Activated CD4-positive, alpha-beta T cell treated with anti-CD3 and anti-CD28 coated beads, Interleukin-2, amount 10 ng/mL, durations not matched to agents 24 days and 14 days (primary cell): ENCODE measurements at regions of chr13 and their contacts with region 1.

Region 1: GRCh38 chr13:40388617-40389016 is 277.8 kb downstream of the FOXO1 start:
- DNase-seq: peak; percentile 95
- H3K4me3 Mint-ChIP-seq: peak overlapping the region; percentile 87
- H3K27ac Mint-ChIP-seq: peak overlapping the region; percentile 97
- H3K4me1 Mint-ChIP-seq: peaks cover 38% of the 10 kb centered on the region
- H3K27me3 Mint-ChIP-seq: no peaks in the 10 kb centered on the region

Region 2: DNA sequence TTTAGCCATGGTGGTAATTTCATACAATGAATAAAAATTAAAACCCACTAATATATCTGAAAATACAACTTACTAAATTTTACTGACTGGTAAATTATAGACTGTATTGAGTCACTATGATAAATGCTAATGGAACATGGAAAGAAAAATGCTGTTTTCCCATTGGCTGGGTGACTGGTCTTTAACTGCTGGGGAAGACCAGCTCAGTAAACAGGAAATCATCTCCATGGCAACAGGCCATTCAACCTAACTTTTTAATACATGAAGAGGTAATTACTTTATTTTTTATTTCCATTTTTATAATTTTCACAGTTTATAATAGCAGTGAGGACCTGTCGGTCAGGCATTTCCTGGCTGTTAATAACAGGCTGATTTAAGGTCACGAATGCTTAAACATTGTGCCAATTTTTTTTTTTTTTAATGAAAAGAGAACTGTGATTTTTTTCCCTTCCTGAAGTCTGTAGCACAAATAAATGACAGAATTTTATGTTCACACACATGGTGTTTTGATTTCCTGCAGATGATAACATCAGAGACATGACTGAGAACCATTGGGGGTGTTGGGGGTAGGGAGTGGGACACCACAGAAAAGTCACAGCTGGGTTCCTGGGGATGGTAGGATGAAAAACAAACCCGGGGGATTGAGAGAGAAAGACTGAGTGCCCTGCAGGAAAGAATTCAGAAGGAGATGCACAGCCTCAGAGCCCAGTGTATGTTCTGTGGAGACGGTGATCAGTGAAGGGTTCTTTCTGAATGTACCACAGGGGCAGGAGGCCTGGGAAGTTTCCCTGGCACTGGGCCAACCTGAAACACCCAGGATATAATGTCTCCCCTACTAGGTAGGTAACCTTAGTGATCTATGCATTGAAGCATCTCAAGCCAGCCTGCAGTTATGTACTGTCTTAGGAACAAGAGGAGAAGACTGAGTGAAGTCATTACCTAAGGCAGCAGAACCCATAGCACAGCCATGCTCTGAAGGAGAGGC is 436.1 kb before region 1 on chr13:
- intact Hi-C with region 1: loop called (anchors 10 kb)
- DNase-seq: no peak
- H3K4me3 Mint-ChIP-seq: no peak overlapping the region
- H3K27ac Mint-ChIP-seq: peak overlapping the region; percentile 54
- H3K4me1 Mint-ChIP-seq: peaks cover 30% of the 10 kb centered on the region
- H3K27me3 Mint-ChIP-seq: peaks cover 5% of the 10 kb centered on the region

Region 3: DNA sequence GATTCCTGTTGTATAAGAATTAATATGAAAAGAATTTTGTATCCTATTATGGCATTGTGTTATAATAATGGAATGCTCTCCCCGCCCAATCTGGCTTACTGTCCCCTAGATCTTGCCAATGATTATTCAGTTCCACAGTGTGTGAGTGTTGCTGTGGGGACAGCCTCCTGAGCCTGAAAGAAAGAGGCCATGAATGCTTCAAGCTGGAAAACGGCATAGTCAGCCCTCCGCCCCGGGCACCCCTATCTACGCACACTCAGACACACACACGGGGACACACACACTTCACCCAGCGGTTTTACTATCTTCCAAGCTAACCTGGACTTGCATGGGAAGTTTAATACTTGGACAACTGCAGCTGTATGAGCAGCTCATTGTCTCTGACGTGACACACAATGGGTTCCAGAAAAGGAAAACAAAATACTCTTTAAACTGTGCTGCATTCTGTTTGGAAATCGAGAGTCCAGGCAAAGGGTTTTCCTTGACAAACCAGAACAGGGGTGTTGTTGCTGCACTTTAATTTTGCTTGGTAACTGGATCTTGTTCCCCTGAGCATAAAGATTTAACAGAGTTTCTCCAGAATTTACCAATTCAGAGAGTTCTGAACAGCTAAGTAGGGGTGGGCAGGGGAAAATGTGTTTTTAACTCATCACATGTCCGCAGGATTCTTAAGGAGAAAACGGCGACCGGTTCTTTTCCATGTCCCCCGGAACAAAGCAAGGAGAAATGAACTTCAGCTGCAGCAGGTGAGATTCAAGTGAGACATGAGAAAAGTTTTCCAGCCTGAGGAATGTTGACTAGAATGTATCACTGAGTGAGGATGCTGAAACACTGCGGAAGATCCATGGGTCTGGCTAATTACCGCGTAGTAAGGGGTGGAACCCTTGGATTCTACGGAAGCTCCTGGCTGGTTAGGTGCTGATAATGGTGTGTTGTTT is 195.1 kb before region 1 on chr13:
- intact Hi-C with region 1: no loop called
- DNase-seq: no peak
- H3K4me3 Mint-ChIP-seq: no peak overlapping the region
- H3K27ac Mint-ChIP-seq: no peak overlapping the region
- H3K4me1 Mint-ChIP-seq: peaks cover 39% of the 10 kb centered on the region
- H3K27me3 Mint-ChIP-seq: no peaks in the 10 kb centered on the region

Region 4: DNA sequence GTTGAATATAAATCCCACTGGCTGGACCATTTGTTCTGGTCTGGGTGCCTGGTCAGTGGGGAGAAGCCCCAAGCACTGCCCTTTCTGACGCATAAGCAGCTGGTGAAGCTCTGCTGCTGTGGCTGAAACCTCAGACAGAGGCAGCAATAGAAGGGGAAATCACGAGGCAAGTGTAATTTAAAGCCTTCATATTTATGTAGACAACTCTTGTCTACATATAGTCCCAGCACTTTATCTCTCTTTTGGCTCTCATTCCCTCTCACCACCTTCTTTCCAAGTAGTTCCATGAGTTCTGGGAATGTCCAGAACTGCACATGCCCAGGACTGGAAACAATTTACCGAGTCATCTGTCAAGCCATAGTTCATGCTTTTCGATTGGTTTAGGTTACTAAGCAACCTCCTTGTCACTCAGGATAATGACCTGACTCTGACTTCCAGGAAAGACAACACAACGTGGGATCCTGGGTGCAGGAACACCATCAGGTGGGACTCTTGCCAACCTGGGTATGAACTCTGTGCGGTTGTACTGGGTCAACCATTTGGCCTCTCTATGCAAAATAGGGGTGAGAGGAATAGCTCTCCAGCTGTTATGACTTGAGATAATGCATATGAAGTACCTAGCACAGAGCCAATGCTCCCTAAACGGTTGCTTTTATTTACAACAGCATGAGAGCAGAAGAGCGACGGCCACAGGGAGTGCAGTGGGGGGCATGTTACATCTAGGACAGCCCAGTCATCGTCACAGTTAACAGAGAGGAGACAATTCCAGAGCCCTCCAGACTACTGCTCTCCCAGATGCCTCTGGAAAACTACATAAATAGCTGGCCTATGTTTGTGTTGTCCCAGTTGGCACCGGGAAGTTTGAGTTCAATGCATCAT is 44.1 kb before region 1 on chr13:
- intact Hi-C with region 1: loop called (anchors 5 kb)
- DNase-seq: no peak
- H3K4me3 Mint-ChIP-seq: no peak overlapping the region
- H3K27ac Mint-ChIP-seq: no peak overlapping the region
- H3K4me1 Mint-ChIP-seq: peaks cover 2% of the 10 kb centered on the region
- H3K27me3 Mint-ChIP-seq: peaks cover 6% of the 10 kb centered on the region

Region 5: GRCh38 chr13:40371531-40372125 is 17.0 kb before region 1 on chr13:
- intact Hi-C with region 1: loop called (anchors 2 kb)
- DNase-seq: no peak
- H3K4me3 Mint-ChIP-seq: peak overlapping the region; percentile 62
- H3K27ac Mint-ChIP-seq: peak overlapping the region; percentile 54
- H3K4me1 Mint-ChIP-seq: peaks cover 39% of the 10 kb centered on the region
- H3K27me3 Mint-ChIP-seq: no peaks in the 10 kb centered on the region

Region 6: GRCh38 chr13:40485611-40486517 is 97.2 kb after region 1 on chr13:
- intact Hi-C with region 1: loop called (anchors 1 kb)
- DNase-seq: peak; percentile 87
- H3K4me3 Mint-ChIP-seq: peak overlapping the region; percentile 69
- H3K27ac Mint-ChIP-seq: peak overlapping the region; percentile 90
- H3K4me1 Mint-ChIP-seq: peaks cover 55% of the 10 kb centered on the region
- H3K27me3 Mint-ChIP-seq: no peaks in the 10 kb centered on the region

Region 7: GRCh38 chr13:40770934-40771618 is 382.5 kb after region 1 on chr13 and contains the start of gene MRPS31:
- intact Hi-C with region 1: loop called (anchors 10 kb)
- DNase-seq: peak; percentile 98
- H3K4me3 Mint-ChIP-seq: peak within 1 kb of the TSS; percentile 98
- H3K27ac Mint-ChIP-seq: peak within 1 kb of the TSS; percentile 98
- H3K4me1 Mint-ChIP-seq: peaks cover 30% of the 10 kb centered on the region
- H3K27me3 Mint-ChIP-seq: no peaks in the 10 kb centered on the region
- total RNA-seq, gene MRPS31: 46.3 TPM in 2 replicates